CD8-positive, alpha-beta T cell (primary cell): ENCODE measurements at regions of chr17 and their contacts with region 1.

Region 1: DNA sequence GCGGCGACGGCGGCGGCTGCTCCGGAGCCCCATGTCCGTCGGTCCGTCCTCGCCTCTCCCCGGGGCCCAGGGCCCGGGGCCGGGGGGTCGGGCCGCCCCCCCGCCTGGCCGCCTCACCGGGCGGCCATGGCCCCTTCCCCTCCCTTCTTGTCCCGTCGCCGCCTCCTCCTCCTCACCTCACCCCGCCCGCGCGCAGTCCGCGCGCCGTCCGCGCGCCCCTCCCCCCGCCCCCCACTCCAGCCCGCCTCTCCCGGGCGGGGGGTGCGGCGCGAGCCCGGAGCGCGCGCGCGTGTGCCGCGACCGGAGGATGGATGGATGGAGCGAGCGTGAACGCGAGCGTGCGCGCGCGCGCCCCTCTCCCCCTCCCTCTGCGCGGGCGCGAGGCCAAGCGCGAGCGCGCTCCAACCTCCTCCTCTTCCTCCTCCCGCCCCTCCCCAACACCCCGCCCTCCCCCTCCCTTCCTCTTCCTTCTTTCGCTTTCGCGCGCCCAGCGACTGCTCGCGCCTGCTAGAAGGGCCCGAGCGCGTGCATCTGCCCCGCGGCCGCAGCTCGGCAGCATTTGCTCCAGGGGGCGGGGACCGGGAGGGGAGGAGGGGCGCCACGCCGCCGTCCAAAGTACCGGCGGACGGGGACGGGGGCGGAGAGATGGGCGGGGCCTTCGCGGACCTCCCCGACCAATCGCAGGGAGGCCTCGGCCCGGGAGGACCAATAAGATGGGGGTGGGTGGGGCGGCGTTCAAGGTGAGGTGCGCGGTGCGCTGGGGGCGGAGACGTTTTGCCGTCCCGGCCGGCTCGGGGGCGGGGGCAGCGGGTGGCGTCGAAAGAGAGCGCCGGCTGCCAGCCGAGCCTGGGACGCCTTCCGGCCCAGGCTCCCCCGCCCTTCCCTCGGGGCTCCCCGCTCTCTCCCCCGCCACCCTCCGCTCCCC is at the start of gene ATXN7L3:
- DNase-seq: peak; percentile 99 to 100 (median 99)
- ATAC-seq: peak; percentile 84
- H3K4me3 ChIP-seq: peak within 1 kb of the TSS; percentile 84 to 96
- H3K4me3 Mint-ChIP-seq: peak within 1 kb of the TSS; percentile 86
- H3K27ac ChIP-seq: peak within 1 kb of the TSS; percentile 69 to 92
- H3K27ac Mint-ChIP-seq: peak within 1 kb of the TSS; percentile 93
- H3K4me1 ChIP-seq: peaks cover 36% of the 10 kb centered on the region
- H3K4me1 Mint-ChIP-seq: peaks cover 43% of the 10 kb centered on the region
- H3K27me3 ChIP-seq: no peaks in the 10 kb centered on the region
- H3K27me3 Mint-ChIP-seq: no peaks in the 10 kb centered on the region
- CTCF ChIP-seq: no peak
- total RNA-seq, gene ATXN7L3: 85.5 to 85.7 TPM

Region 2: GRCh38 chr17:43946069-43946696 is 253.6 kb before region 1 on chr17:
- CTCF ChIA-PET with region 1: no interaction called
- POLR2A ChIA-PET with region 1: no interaction called
- intact Hi-C with region 1: no loop called
- DNase-seq: no peak
- ATAC-seq: no peak
- H3K4me3 ChIP-seq: no peak overlapping the region
- H3K4me3 Mint-ChIP-seq: no peak overlapping the region
- H3K27ac ChIP-seq: no peak overlapping the region
- H3K27ac Mint-ChIP-seq: no peak overlapping the region
- H3K4me1 ChIP-seq: no peaks in the 10 kb centered on the region
- H3K4me1 Mint-ChIP-seq: no peaks in the 10 kb centered on the region
- H3K27me3 ChIP-seq: peaks cover 0 to under 1% of the 10 kb centered on the region in 2 experiments
- H3K27me3 Mint-ChIP-seq: peaks cover 17% of the 10 kb centered on the region
- CTCF ChIP-seq: no peak

Region 3: DNA sequence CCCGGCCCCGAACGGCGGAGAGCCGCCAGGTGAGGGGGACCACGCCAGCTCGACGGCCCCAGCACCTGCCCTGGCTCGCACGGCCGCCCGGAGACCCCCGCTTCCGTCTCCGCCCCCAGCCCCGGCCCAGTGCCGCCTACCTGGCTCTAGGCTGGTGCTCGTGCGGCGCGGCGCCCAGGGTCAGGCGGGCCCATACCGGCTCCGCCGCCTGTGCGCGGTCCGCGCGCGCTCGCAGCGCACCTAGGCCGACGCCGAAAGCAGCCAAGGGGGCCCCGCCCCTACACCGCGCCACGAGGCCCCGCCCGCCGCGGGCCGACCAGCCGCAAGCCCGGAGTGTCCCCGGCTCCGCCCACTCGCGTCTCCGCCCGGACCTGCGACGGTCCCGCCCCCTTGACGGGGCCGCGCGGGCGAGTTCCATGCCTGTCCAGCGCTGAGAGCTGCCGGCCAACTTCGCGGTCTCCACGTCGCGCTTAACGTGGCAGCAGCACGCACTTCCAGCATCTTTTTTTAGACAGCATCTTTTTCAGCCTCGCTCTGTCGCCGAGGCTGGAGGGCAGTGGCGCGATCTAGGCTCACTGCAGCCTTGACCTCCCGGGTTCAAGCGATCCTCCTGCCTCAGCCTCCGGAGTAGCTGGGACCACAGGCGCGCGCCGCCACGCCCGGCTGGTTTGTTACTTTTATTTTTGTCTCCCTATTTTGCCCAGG is 124.9 kb after region 1 on chr17 and contains the start of gene SLC25A39:
- CTCF ChIA-PET with region 1: interaction called, 16 read pairs
- POLR2A ChIA-PET with region 1: interaction called, 3 read pairs
- intact Hi-C with region 1: loop called in 1 of 2 experiments (anchors 1 kb)
- DNase-seq: peak; percentile 90 to 98 (median 96)
- ATAC-seq: peak; percentile 72
- H3K4me3 ChIP-seq: peak within 1 kb of the TSS; percentile 84 to 91
- H3K4me3 Mint-ChIP-seq: peak within 1 kb of the TSS; percentile 88
- H3K27ac ChIP-seq: peak within 1 kb of the TSS; percentile 88 to 93
- H3K27ac Mint-ChIP-seq: peak within 1 kb of the TSS; percentile 96
- H3K4me1 ChIP-seq: peaks cover 14% of the 10 kb centered on the region
- H3K4me1 Mint-ChIP-seq: peaks cover 30% of the 10 kb centered on the region
- H3K27me3 ChIP-seq: no peaks in the 10 kb centered on the region
- H3K27me3 Mint-ChIP-seq: no peaks in the 10 kb centered on the region
- CTCF ChIP-seq: no peak
- total RNA-seq, gene SLC25A39: 73.1 to 77.7 TPM

Region 4: DNA sequence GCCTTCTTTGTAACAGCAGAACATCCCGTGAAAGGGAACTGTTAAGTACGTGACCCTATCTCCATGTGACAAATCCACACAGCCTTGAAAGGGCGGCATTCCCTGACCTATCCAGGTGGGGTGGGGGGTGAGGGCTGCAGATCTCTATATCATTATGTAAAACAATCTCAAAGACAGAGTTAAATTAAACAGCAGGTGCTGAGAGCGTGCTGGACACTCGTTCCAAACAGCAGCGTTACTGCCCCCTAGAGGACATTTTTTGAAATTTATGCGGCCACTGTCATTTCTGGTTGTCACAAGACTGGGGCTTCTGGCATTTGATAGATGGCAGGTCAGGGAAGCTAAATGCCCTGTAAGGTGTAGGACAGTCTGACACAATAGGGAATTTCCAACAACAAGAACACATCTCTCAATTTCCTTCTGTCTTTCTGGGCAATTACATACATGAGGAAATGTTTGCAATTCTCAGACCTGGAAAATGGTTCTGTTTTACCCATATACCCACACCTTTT is 131.5 kb after region 1 on chr17:
- CTCF ChIA-PET with region 1: interaction called, 16 read pairs
- POLR2A ChIA-PET with region 1: interaction called, 3 read pairs
- intact Hi-C with region 1: loop called in 1 of 2 experiments (anchors 1 kb)
- DNase-seq: peak; percentile 45 to 85 (median 75)
- ATAC-seq: no peak
- H3K4me3 ChIP-seq: no peak overlapping the region
- H3K4me3 Mint-ChIP-seq: no peak overlapping the region
- H3K27ac ChIP-seq: no peak overlapping the region
- H3K27ac Mint-ChIP-seq: no peak overlapping the region
- H3K4me1 ChIP-seq: peaks cover 4% of the 10 kb centered on the region
- H3K4me1 Mint-ChIP-seq: peaks cover 12% of the 10 kb centered on the region
- H3K27me3 ChIP-seq: no peaks in the 10 kb centered on the region
- H3K27me3 Mint-ChIP-seq: no peaks in the 10 kb centered on the region
- CTCF ChIP-seq: peak; percentile 89

Region 5: GRCh38 chr17:45051060-45051719 is 851.4 kb after region 1 on chr17 and contains the start of gene DCAKD:
- CTCF ChIA-PET with region 1: no interaction called
- POLR2A ChIA-PET with region 1: no interaction called
- intact Hi-C with region 1: loop called in 1 of 2 experiments (anchors 10 kb)
- DNase-seq: peak; percentile 76 to 97 (median 85)
- ATAC-seq: peak; percentile 90
- H3K4me3 ChIP-seq: peak within 1 kb of the TSS; percentile 61 to 82
- H3K4me3 Mint-ChIP-seq: peak within 1 kb of the TSS; percentile 86
- H3K27ac ChIP-seq: peak within 1 kb of the TSS; percentile 78 to 95
- H3K27ac Mint-ChIP-seq: peak within 1 kb of the TSS; percentile 94
- H3K4me1 ChIP-seq: peaks cover 29% of the 10 kb centered on the region
- H3K4me1 Mint-ChIP-seq: peaks cover 36% of the 10 kb centered on the region
- H3K27me3 ChIP-seq: no peaks in the 10 kb centered on the region
- H3K27me3 Mint-ChIP-seq: no peaks in the 10 kb centered on the region
- CTCF ChIP-seq: no peak
- total RNA-seq, gene DCAKD: 8.3 to 8.4 TPM

Region 6: GRCh38 chr17:45060797-45061605 is 861.2 kb after region 1 on chr17 and contains the start of gene NMT1:
- CTCF ChIA-PET with region 1: no interaction called
- POLR2A ChIA-PET with region 1: no interaction called
- intact Hi-C with region 1: loop called in 1 of 2 experiments (anchors 2 kb)
- DNase-seq: peak; percentile 88 to 99 (median 94)
- ATAC-seq: peak; percentile 90
- H3K4me3 ChIP-seq: peak within 1 kb of the TSS; percentile 84 to 88
- H3K4me3 Mint-ChIP-seq: peak within 1 kb of the TSS; percentile 97
- H3K27ac ChIP-seq: peak within 1 kb of the TSS; percentile 81 to 91
- H3K27ac Mint-ChIP-seq: peak within 1 kb of the TSS; percentile 99
- H3K4me1 ChIP-seq: peaks cover 32% of the 10 kb centered on the region
- H3K4me1 Mint-ChIP-seq: peaks cover 43% of the 10 kb centered on the region
- H3K27me3 ChIP-seq: no peaks in the 10 kb centered on the region
- H3K27me3 Mint-ChIP-seq: no peaks in the 10 kb centered on the region
- CTCF ChIP-seq: no peak
- total RNA-seq, gene NMT1: 62.6 to 66.6 TPM